ENCODE measurements at regions of chr11 and their contacts with region 1.

Region 1: DNA sequence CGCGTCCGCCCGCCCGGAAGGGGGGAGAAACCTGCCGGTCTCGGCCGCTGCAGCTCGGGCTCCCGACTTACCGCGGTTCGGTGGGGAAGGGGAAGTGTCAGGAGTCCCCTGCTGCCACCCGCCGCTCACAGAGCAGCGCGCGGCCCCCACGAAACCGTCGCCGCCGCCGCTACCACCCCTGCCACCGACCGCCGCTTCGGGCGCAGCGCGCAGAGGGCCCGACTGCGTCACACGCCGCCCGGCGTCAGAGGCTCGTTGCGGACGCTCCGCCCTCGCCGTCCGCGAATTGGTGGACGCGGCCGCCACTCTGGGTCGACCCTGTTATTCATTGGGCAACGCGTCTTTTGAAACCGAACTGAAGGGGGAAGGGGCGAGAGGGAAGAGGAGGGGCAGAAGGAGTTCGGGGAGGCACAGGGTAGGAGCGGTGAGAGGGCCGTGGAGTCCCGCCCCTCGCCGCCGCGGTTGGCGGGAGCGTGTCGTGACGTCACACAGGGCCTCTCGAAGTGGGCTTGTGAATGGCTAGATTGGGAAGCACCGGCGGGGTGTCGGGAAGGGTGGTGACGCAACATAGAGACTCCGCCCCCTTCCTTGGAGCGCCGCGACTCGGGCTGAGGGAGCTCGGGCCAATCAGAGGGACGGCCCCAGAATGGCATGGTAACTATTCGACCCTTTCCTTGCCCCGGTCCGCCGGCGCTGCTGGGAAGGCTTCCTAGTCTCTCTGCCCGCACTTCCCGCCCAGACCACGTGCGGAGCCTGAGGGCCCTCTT is at the start of gene NUP98:
- DNase-seq: peak; percentile 98

Region 2: DNA sequence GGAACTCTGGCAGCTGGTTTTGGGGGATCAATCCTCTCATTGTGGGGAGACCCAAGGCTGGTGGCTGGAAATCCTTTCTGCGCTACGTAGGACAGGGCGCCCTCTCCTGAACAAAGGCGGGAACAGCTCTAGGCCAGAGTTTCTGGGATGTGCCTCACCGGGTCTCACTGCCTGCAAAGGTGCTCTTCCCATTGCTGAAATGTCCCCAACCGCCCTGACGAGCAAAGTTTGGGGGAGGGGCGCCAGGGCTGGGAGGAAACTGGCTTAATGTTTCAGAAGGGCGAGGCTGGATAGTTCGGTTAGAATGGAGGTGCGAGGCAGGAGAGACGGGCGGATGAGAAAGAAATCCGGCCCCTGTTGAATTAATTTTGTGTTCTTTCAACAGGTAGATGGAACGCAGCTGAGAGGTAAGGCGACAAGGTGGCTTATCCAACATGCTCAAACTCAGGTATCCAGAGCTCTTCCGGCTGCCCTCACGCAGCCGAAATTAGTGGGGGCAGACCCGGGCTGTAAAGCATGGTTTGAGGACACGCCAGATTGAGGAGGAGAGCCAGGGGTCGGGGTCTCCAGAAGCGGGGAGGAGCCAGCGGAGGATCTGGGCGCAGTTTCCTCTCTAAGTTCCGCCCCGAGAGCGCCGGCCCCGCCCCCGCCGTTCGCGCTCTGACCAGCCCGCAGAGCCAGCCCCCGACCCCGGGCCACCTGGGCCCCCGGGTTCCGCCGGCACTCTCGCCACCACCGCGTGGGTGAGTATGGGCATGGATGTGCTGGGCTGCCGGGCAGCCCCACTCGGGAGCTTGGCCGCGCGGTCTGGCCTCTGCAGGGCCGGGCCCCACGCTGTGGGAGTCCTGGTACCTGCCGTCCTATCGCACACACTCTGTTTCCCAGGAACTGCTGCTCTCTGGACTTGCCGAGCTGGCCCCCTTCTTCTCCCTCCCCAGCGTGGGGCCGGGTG is 10.7 kb after region 1 on chr11 and contains the start of gene PGAP2:
- CTCF ChIA-PET with region 1: interaction called, 4 read pairs
- POLR2A ChIA-PET with region 1: interaction called, 28 read pairs
- DNase-seq: peak; percentile 80

Measured in HEK293T (cell line).